ENCODE measurements at regions of chr17 and their contacts with region 1.

Region 1: DNA sequence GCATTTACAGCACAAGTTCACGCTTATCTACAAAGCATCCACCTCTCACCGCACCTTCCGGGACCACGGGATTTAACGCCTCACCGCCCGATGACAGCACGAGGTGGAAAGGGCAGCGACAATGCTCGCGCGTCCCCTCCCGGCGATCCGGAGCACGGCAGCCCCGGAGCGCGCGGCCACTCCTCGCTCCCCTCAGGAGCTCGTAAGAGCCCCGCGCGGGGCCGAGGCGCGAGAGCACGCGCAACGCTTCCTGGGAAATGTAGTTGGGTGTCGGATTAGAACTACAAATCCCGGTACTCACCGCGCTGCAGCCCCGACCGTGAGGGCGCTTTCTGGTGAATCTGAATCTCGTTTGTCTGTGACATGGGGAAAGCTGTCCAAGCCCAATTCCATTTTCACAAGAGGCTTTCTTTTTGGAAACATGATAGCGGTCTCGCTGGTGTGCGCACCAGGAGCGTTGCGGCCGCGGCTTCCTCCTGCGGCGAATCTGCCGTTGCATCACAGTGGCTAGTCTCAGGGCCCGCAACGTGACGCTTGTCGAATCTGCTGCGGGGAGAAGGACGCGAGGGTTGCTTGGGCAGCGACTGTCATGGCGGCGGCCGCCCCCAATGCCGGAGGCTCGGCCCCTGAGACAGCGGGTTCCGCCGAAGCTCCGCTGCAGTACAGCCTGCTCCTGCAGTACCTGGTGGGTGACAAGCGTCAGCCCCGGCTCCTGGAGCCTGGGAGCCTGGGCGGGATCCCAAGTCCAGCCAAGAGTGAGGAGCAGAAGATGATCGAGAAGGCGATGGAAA is at the start of gene TIMM22:
- DNase-seq: peak; percentile 96
- total RNA-seq, gene TIMM22: 17.8 TPM

Region 2: DNA sequence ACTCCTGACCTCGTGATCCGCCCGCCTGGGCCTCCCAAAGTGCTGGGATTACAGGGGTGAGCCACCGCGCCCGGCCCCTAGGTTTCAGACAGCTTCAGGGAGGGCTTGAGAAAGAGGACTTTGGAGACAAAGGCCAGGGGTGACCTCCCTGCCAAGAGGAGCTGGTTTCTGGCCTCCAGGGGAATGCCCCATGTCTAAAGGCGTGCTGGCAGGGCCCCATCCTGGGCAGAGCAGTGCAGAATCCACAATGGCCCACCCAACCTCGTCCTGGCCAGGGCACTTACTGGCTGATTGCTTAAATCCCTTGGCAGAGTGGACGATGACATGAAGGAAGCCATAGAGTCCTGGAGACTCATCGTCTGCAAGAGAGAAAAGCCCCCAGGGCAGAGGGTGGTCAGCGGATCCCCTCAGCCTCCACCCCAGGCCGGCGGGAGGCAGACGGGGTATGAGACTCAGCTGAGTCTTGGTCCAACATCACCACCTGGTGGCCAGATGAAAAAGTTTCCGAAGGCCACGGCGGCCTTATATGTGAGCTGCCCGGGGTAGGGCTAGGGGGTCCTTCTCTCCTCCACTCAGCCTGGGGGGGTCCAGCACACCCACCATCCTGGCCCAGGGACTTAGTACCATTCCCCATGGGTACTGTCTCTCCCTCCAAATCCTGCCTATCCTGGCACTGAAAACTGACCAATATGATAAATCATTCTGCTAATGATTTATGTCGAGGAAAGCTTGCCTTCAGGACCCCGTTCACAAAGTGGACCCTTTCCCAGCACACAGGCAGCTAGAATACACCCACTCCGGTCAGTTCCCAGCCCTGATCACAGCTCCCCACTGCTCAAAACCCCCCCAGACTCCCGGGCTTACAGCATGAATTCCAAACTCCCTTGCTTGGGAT is 59.2 kb after region 1 on chr17:
- intact Hi-C with region 1: loop called (anchors 5 kb)
- DNase-seq: no peak

Region 3: GRCh38 chr17:1164935-1165556 is 168.3 kb after region 1 on chr17:
- intact Hi-C with region 1: no loop called
- DNase-seq: no peak

Measured in cardiac septum (tissue), 1 donor.